ENCODE measurements at regions of chr13 and their contacts with region 1.

Region 1: GRCh38 chr13:113275387-113275786 is 21.7 kb upstream of the LAMP1 start:
- DNase-seq: peak; percentile 38
- ATAC-seq: no peak
- H3K4me3 ChIP-seq: no peak overlapping the region
- H3K4me3 Mint-ChIP-seq: no peak overlapping the region
- H3K27ac ChIP-seq: no peak overlapping the region
- H3K27ac Mint-ChIP-seq: no peak overlapping the region
- H3K4me1 ChIP-seq: no peaks in the 10 kb centered on the region
- H3K4me1 Mint-ChIP-seq: no peaks in the 10 kb centered on the region
- H3K27me3 ChIP-seq: peaks cover 0 to 3% (median 0%) of the 10 kb centered on the region in 4 experiments
- H3K27me3 Mint-ChIP-seq: peaks cover 21% of the 10 kb centered on the region
- CTCF ChIP-seq: peak; percentile 36

Region 2: DNA sequence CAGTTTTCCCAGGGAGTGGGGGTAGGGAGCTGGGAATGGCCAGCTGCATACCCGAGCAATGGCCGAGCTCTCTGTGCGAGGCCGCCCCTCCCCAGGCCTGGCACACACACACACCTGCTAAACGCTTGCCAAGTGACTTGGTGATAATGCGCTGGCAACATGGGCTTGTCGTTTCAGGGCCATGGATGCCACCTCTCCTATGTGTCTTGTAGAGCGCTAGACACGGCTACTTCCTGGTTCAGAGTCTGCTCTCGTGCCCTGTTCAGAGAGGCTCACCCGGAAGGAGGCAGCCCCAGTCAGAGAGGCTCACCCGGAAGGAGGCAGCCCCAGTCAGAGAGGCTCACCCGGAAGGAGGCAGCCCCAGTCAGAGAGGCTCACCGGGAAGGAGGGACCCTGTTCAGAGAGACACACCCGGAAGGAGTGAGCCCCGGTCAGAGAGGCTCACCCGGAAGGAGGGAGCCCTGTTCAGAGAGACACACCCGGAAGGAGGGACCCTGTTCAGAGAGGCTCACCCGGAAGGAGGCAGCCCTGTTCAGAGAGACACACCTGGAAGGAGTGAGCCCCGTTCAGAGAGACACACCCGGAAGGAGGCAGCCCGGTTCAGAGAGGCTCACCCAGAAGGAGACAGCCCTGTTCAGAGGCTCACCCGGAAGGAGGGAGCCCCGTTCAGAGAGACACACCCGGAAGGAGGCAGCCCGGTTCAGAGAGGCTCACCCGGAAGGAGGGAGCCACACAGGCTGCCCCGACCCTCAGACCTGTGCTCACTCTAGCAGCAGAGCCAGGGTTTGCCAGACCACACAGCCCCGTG is 173.7 kb after region 1 on chr13:
- CTCF ChIA-PET with region 1: interaction called, 7 read pairs
- POLR2A ChIA-PET with region 1: no interaction called
- intact Hi-C with region 1: loop called (anchors 2 kb)
- DNase-seq: peak; percentile 54
- ATAC-seq: no peak
- H3K4me3 ChIP-seq: peak overlapping the region in 1 of 5 experiments; percentile 35
- H3K4me3 Mint-ChIP-seq: peak overlapping the region; percentile 16
- H3K27ac ChIP-seq: peak overlapping the region in 1 of 2 donors; percentile 18
- H3K27ac Mint-ChIP-seq: peak overlapping the region; percentile 32
- H3K4me1 ChIP-seq: peaks cover 11 to 27% of the 10 kb centered on the region in 2 donors
- H3K4me1 Mint-ChIP-seq: peaks cover 33% of the 10 kb centered on the region
- H3K27me3 ChIP-seq: peaks cover 0 to 3% (median 0%) of the 10 kb centered on the region in 4 experiments
- H3K27me3 Mint-ChIP-seq: no peaks in the 10 kb centered on the region
- CTCF ChIP-seq: no peak

Region 3: DNA sequence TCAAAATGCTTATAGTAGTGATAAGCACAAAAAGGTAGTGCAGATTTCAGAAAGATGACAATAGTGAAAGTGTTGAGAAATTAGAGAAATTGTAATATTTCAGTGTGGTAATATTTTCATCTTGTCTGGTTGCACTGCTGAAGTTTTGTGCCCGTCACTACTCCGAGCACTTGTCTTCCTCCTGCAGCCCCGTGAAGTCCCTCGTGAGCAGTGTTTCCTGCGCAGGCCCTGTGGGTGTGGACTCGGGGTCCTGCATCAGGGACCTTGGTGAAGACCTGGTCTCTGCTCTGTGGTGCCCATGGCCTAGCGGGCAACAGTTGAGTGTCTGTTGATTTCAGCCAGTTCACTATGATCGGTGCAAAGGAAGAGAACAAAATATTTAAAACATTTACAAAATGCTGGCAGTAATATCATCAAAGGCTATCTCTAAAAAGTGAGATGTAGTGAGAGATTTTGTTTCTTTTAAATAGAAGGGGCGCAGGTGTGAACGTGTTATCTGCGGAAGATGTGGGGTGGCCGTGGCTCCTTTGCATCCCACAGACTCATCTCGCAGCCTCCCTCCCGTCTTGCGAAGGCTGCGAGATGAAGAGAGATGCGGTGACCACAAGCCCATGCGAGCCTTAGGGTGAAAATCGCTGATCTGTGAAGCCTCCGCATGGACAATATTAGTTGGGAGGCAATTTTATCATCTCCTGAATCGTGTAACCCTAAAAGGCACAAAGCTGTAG is 242.9 kb after region 1 on chr13:
- CTCF ChIA-PET with region 1: no interaction called
- POLR2A ChIA-PET with region 1: no interaction called
- intact Hi-C with region 1: no loop called
- DNase-seq: no peak
- ATAC-seq: no peak
- H3K4me3 ChIP-seq: no peak overlapping the region
- H3K4me3 Mint-ChIP-seq: no peak overlapping the region
- H3K27ac ChIP-seq: no peak overlapping the region
- H3K27ac Mint-ChIP-seq: no peak overlapping the region
- H3K4me1 ChIP-seq: no peaks in the 10 kb centered on the region
- H3K4me1 Mint-ChIP-seq: no peaks in the 10 kb centered on the region
- H3K27me3 ChIP-seq: no peaks in the 10 kb centered on the region
- H3K27me3 Mint-ChIP-seq: no peaks in the 10 kb centered on the region
- CTCF ChIP-seq: no peak